Ascending aorta (tissue), 2 donors: ENCODE measurements at regions of chr19 and their contacts with region 1.

Region 1: GRCh38 chr19:34501339-34502320 is 20.1 kb downstream of the WTIP start:
- DNase-seq: peak; percentile 82 to 97
- H3K4me3 ChIP-seq: no peak overlapping the region
- H3K27ac ChIP-seq: peak overlapping the region; percentile 58 to 86
- H3K4me1 ChIP-seq: peaks cover 0 to 18% of the 10 kb centered on the region in 2 donors
- H3K27me3 ChIP-seq: no peaks in the 10 kb centered on the region
- CTCF ChIP-seq: peak; percentile 99 to 100 (median 100)

Region 2: GRCh38 chr19:34359140-34359953 is 142.3 kb before region 1 on chr19:
- intact Hi-C with region 1: loop called (anchors 1 kb)
- DNase-seq: peak; percentile 91 to 97
- H3K4me3 ChIP-seq: peak overlapping the region; percentile 40 to 50
- H3K27ac ChIP-seq: peak overlapping the region; percentile 66 to 83
- H3K4me1 ChIP-seq: peaks cover 0 to 3% of the 10 kb centered on the region in 2 donors
- H3K27me3 ChIP-seq: no peaks in the 10 kb centered on the region
- CTCF ChIP-seq: peak; percentile 44 to 63 (median 44)

Region 3: DNA sequence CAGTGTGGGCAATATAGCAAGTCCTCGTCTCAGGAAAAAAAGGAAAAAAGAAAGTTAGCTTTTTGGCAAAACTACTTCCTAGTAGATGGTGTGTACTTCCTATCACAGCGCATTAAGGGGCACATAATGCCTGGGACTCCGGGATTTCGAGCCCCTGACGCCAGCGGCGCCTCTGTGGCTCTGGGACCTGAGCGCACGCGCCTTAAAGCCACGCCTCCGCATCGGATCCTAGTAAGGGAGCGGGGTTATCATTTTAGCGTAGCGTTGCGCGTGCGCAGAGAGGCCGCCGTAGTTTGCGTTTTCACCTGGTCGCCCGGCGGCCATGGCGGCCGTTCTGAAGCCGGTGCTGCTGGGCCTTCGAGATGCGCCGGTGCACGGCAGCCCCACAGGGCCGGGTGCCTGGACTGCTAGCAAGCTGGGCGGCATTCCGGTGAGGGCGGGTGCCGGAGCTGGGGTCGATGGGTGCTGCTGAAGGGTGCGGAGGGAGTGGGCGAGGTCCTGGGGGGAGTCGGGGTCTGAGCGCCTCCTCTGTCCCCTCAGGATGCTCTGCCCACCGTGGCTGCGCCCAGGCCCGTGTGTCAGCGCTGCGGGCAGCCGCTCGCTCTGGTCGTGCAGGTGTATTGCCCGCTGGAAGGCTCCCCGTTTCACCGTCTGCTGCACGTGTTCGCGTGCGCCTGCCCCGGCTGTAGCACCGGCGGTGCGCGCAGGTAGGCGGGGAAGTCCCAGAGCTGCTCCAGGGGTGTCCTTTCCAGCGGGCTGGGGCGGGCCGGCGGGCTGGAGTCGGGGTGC is 97.3 kb before region 1 on chr19 and contains the start of gene PDCD2L:
- intact Hi-C with region 1: loop called (anchors 2 kb)
- DNase-seq: peak; percentile 53 to 95
- H3K4me3 ChIP-seq: peak within 1 kb of the TSS; percentile 77 to 93
- H3K27ac ChIP-seq: peak within 1 kb of the TSS; percentile 20 to 43
- H3K4me1 ChIP-seq: peaks cover 3 to 7% of the 10 kb centered on the region in 2 donors
- H3K27me3 ChIP-seq: no peaks in the 10 kb centered on the region
- CTCF ChIP-seq: no peak
- total RNA-seq, gene PDCD2L: 30.0 TPM

Region 4: GRCh38 chr19:34428549-34429285 is 72.9 kb before region 1 on chr19:
- intact Hi-C with region 1: loop called (anchors 5 kb)
- DNase-seq: peak in 1 of 2 donors; percentile 71
- H3K4me3 ChIP-seq: peak overlapping the region; percentile 75 to 88
- H3K27ac ChIP-seq: peak overlapping the region; percentile 93 to 99
- H3K4me1 ChIP-seq: peaks cover 8 to 40% of the 10 kb centered on the region in 2 donors
- H3K27me3 ChIP-seq: no peaks in the 10 kb centered on the region
- CTCF ChIP-seq: no peak

Region 5: DNA sequence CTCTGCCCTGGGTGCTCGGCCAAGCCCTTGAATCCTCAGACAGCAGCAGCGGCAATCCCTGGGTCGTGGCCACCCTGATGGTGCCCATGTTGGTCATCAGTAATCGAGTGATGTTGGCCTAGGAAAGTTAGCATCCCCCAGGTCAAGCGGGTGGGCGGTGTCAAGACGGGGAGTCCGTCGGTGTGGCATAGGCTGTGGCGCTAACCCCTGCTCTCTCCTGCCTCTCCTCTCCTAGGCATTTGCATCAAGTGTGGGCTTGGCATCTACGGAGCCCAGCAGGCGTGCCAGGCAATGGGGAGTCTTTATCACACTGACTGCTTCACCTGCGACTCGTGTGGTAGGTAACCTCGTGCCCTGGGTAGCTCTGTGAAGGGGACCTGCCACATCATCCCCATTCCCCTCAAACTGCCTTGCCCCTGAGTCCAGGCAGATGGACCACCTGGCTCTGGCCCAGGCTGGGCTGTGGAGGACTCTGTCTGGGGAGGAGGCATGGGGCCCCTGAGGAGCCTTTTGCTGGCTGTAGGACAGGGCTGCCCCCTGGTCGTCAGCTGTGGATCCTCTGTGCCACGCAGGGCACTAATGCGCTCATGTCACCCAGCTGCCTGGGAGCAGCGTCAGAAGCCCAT is 11.4 kb before region 1 on chr19:
- intact Hi-C with region 1: no loop called
- DNase-seq: no peak
- H3K4me3 ChIP-seq: no peak overlapping the region
- H3K27ac ChIP-seq: no peak overlapping the region
- H3K4me1 ChIP-seq: peaks cover 0 to 6% of the 10 kb centered on the region in 2 donors
- H3K27me3 ChIP-seq: no peaks in the 10 kb centered on the region
- CTCF ChIP-seq: no peak

Region 6: GRCh38 chr19:34712395-34713261 is 211.0 kb after region 1 on chr19:
- intact Hi-C with region 1: loop called (anchors 1 kb)
- DNase-seq: peak in 1 of 2 donors; percentile 67
- H3K4me3 ChIP-seq: no peak overlapping the region
- H3K27ac ChIP-seq: no peak overlapping the region
- H3K4me1 ChIP-seq: no peaks in the 10 kb centered on the region
- H3K27me3 ChIP-seq: no peaks in the 10 kb centered on the region
- CTCF ChIP-seq: peak; percentile 57 to 79 (median 61)